Activated T-helper 1 cell treated with anti-CD3 and anti-CD28 coated beads, Interleukin-12 subunit alpha, Interleukin-12 subunit beta, Interleukin-2, Interleukin-4 antibody, amounts not matched to agents 30 ng/mL and 10 ng/mL and 1 ng/mL, durations not matched to agents 14 hours and 24 hours and 36 hours (primary cell): ENCODE measurements at regions of chr4 and their contacts with region 1.

Region 1: GRCh38 chr4:98430708-98431403 is 169.7 kb downstream of the RAP1GDS1 start:
- DNase-seq: no peak
- H3K4me3 Mint-ChIP-seq: no peak overlapping the region
- H3K27ac Mint-ChIP-seq: no peak overlapping the region
- H3K4me1 Mint-ChIP-seq: peaks cover 21% of the 10 kb centered on the region
- H3K27me3 Mint-ChIP-seq: no peaks in the 10 kb centered on the region

Region 2: DNA sequence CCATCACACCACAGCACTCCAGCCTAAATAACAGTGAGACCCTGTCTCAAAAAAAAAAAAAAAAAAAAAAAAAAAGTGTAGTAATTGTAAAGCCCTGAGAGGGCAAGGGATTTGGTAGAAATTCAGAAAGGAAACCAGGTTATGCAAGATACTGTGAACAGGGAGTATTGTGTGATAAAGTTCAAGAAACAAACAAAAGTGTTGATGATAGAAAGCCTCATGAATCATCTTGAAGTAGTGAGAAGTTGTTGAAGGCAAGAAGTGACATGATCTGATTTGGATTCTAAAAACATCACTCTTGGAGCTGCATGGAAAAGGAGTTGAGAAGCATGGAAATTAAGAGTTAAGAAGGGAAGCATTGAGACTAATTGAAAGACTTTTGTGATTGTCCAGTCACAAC is 67.4 kb before region 1 on chr4:
- intact Hi-C with region 1: no loop called
- DNase-seq: no peak
- H3K4me3 Mint-ChIP-seq: no peak overlapping the region
- H3K27ac Mint-ChIP-seq: no peak overlapping the region
- H3K4me1 Mint-ChIP-seq: peaks cover 12% of the 10 kb centered on the region
- H3K27me3 Mint-ChIP-seq: no peaks in the 10 kb centered on the region

Region 3: GRCh38 chr4:98406819-98407218 is 24.0 kb before region 1 on chr4:
- intact Hi-C with region 1: no loop called
- DNase-seq: no peak
- H3K4me3 Mint-ChIP-seq: no peak overlapping the region
- H3K27ac Mint-ChIP-seq: no peak overlapping the region
- H3K4me1 Mint-ChIP-seq: peaks cover 25% of the 10 kb centered on the region
- H3K27me3 Mint-ChIP-seq: no peaks in the 10 kb centered on the region

Region 4: DNA sequence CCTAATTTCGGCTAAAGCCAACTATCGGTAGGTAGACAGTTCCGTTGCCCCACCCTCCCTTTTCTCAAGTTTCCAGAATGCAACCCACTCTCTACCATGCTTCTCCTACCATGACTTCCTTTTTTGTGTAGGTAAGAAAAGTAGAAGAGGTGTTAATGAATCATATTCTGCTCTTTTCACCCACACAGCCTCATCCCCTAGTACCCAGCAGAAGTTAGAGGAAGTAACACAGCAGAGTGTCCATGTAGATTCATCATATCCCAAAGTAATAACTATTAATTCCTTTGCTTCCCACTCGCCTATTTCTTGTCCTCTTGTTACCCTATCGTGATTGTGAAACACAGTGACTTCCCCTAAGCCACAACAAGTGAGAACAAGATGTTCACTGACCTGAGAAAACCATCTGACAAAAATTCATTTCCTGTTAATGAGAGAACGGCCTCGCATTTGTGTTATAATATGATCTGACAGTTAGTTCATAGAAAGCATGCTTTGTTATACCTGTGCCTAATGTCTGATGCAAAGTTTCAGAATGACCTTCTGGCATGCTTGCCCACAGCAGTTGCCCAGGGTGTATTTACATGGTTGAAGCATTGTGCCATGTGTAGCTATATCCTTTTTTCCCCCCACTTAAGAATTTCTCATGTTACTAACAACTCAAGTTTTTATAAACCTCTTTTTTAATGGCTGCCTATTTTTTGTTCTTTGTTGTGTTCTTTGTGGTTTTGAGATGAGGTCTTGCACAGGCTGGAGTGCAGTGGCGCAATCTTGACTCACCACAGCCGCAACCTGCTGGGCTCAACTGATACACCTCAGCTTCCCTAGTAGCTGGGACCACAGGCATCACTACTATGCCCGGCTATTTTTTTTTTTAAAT is 15.9 kb after region 1 on chr4:
- intact Hi-C with region 1: loop called (anchors 1 kb)
- DNase-seq: peak; percentile 44
- H3K4me3 Mint-ChIP-seq: peak overlapping the region; percentile 67
- H3K27ac Mint-ChIP-seq: peak overlapping the region; percentile 90
- H3K4me1 Mint-ChIP-seq: peaks cover 43% of the 10 kb centered on the region
- H3K27me3 Mint-ChIP-seq: peaks cover 3% of the 10 kb centered on the region